ENCODE measurements at regions of chr7 and their contacts with region 1.

Region 1: DNA sequence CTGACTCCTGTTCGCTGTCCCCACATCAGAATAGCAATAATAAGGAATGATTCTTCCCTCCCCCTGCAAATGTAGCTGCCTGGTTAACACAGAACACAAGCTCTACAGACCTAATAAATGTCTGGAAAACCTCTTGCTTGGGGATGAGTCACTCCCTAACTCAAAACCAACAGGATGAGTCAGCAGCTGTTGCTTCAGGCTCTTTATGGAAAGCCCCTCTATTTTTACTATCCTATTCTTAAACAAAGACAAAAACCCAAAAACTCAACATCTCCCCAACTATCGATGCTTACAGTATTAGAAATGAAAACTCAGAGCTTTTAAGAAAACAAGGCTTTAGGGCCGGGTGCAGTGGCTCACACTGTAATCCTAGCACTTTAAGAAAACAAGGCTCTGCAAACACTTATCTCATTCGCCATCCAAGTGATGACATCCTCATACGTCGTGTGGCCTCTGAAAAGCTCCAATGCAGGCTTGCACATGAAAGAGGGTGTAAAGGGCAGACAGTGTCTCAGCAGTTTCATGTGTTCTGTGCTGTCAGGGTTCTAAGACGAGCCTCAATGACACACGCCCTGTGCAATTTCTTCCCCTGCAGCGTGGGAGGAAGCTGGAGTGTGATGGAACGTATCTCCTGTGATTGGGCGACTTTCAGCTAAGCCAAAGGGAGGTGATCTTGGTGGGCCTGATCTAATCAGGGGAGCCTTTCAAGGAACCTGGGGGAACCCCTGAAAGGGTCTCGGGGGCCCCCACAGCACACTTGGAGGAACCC is 70.1 kb downstream of the AMZ1 start:
- DNase-seq: peak; percentile 89 to 97 (median 97)
- H3K4me3 ChIP-seq: no peak overlapping the region
- H3K27ac ChIP-seq: peak overlapping the region; percentile 83 to 91
- H3K4me1 ChIP-seq: peaks cover 7 to 68% (median 55%) of the 10 kb centered on the region in 4 experiments
- H3K27me3 ChIP-seq: no peaks in the 10 kb centered on the region

Region 2: GRCh38 chr7:2720582-2721491 is 37.3 kb before region 1 on chr7:
- CTCF ChIA-PET with region 1: interaction called, 21 read pairs
- POLR2A ChIA-PET with region 1: interaction called, 3 read pairs
- DNase-seq: peak; percentile 85 to 89 (median 86)
- H3K4me3 ChIP-seq: peak overlapping the region in 1 of 7 experiments; percentile 9
- H3K27ac ChIP-seq: peak overlapping the region in 1 of 2 experiments; percentile 43
- H3K4me1 ChIP-seq: peaks cover 4 to 65% (median 58%) of the 10 kb centered on the region in 4 experiments
- H3K27me3 ChIP-seq: no peaks in the 10 kb centered on the region

Region 3: DNA sequence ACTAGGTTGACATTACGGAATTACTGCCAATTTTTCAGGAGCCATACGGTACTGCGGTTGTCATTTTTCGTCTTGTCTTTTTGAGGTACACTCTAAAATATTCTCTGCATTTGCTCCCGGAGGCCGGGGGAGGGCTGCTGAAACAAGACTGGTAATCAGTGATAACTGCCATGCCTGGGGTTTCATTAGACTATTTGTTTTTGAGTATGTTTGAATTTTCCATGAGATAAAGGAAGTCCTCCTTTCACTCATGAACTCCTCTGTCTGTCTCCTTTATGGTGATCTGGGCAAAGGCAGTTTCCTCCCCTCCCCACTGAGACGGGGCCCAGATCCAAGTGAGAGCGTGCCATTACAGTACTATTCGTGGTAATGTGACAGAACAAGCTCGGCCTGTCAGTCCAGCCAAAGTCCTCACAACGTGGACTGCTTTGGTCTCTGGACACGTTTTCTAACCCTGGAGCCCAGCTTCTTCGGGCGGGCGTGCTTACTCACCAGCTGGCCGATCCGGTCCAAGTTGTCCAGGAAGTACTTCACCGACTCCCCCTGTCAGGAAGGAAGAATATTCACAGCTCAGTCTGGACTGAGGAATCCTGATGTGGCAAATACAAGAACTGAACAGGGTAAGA is 25.0 kb before region 1 on chr7:
- CTCF ChIA-PET with region 1: interaction called, 96 read pairs
- POLR2A ChIA-PET with region 1: interaction called, 28 read pairs
- DNase-seq: peak in 2 of 3 donors; percentile 48 to 60
- H3K4me3 ChIP-seq: peak overlapping the region in 2 of 7 experiments; percentile 27 to 32
- H3K27ac ChIP-seq: peak overlapping the region; percentile 98 to 99
- H3K4me1 ChIP-seq: peaks cover 17 to 100% (median 89%) of the 10 kb centered on the region in 4 experiments
- H3K27me3 ChIP-seq: no peaks in the 10 kb centered on the region

Region 4: DNA sequence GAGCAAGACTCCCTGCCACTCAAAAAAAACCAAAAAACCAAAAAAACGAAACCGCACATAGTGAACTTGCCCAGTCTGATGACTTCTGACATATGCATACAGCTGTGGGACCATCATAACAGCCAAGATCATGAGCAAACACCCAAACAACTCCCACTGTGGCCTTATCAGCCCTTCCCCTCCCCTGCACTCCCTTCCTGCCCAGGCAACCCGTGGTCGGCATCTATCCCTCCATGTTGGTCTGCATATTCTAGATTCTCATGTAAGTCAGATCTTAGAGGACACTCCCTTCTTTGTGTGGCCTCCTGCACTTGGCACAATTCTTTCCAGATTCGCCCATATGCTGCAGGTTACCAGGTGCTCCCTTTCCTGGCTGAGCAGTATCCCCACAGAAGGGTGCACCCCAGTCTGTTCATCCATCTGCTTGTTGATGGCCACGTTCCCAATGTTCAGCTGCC is 13.2 kb after region 1 on chr7:
- CTCF ChIA-PET with region 1: interaction called, 32 read pairs
- POLR2A ChIA-PET with region 1: interaction called, 11 read pairs
- DNase-seq: peak; percentile 89 to 97 (median 96)
- H3K4me3 ChIP-seq: peak overlapping the region in 2 of 7 experiments; percentile 25 to 27
- H3K27ac ChIP-seq: peak overlapping the region in 1 of 2 experiments; percentile 71
- H3K4me1 ChIP-seq: peaks cover 0 to 44% (median 24%) of the 10 kb centered on the region in 4 experiments
- H3K27me3 ChIP-seq: no peaks in the 10 kb centered on the region

Measured in common myeloid progenitor, CD34-positive (primary cell).